ENCODE measurements at regions of chr10 and their contacts with region 1.

Region 1: DNA sequence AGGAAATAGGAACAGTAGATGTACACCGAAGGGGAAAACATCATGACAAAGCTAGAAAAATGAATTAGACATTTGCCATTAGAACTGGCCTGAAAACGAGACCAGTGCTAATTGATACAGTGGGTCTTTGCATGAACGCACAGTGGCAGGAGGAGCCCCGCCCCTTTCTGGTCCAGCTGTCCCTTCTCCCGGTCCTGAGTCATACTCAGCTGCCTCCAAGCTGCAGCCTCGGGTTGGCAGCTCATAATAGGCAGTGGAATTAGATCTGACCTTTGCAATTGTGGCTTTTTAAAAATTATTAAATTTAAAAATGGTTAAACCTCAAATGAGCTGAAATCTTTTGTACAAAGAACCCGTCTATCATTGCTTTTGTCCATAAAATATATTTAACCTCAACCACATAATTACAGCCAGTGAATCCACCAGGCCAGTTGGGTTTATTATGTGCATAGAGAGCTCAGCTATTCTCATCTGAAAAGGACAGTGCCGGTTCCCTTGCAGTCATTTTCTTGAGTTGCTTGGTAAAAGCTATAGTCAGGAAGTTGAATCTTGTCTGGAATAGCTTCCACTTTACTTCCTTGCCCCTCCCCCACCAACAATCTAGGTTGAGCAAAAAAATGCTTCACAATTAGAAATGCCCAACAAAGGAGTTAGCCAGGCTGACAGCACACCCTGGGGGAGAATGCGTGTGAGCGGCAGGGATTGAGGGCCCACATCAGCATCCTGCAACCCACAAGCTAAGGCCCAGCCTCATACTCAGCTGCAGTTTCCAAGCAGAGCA is 147.1 kb downstream of the BUB3 start:
- DNase-seq: peak; percentile 14 to 92 (median 90)
- H3K4me3 ChIP-seq: peak overlapping the region in 1 of 59 donors; percentile 3
- H3K27ac ChIP-seq: peak overlapping the region in 58 of 59 donors; percentile 51 to 98 (median 91)
- H3K27me3 ChIP-seq: no peaks in the 10 kb centered on the region
- CTCF ChIP-seq: peak in 25 of 56 donors; percentile 2 to 52 (median 22)

Region 2: DNA sequence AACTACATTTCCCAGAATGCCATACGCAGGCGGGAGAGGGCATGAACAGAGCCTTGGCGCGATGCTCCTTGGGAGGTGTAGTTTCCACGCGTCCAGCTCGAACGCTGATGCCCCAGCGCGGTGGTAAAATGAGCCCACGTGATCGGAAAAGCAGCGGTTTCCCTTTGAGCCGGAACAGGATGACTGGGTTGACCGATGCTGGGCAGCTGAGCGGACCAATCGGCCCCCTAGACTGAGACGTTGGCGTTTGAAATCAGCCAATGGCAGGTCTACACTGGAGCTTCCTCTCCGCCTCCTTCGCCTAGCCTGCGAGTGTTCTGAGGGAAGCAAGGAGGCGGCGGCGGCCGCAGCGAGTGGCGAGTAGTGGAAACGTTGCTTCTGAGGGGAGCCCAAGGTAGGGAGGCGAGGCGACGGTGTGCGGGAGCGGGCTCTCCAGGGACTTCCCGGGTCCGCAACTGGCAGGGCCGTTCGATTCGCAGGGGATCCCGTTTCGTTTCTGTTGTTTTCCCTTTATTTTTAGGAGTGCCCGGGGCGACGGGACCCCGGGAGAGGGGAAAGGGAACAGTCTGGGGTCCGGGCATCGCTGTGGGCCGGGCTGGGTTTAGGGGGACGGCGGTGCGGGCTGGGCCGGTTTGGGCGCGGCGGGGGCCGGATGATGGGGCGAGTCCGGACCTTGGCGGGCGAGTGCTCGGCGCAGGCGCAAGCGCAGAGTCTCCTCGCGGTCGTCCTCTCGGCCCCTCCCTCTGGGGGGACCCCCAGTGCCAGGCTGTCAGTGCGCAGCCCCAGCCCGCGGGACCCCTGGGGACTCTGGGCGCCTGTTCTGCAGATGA is 147.0 kb before region 1 on chr10 and contains the start of gene BUB3:
- intact Hi-C with region 1: loop called (anchors 10 kb)
- DNase-seq: peak; percentile 98 to 100 (median 100)
- H3K4me3 ChIP-seq: peak within 1 kb of the TSS; percentile 68 to 100 (median 93)
- H3K27ac ChIP-seq: peak within 1 kb of the TSS in 54 of 59 donors; percentile 25 to 93 (median 82)
- H3K27me3 ChIP-seq: peaks cover 17 to 42% (median 37%) of the 10 kb centered on the region in 45 donors
- CTCF ChIP-seq: peak in 40 of 56 donors; percentile 10 to 59 (median 42)
- total RNA-seq, gene BUB3: 42.8 to 88.8 (median 64.1) TPM

Measured in dorsolateral prefrontal cortex (tissue), 120 donors.